Dorsolateral prefrontal cortex (tissue), 120 donors: ENCODE measurements at regions of chr11 and their contacts with region 1.

Region 1: GRCh38 chr11:72080256-72080974 is at the starts of genes LRRC51 and NUMA1:
- DNase-seq: peak; percentile 98 to 100 (median 100)
- H3K4me3 ChIP-seq: peak within 1 kb of the TSS; percentile 50 to 98 (median 85)
- H3K27ac ChIP-seq: peak within 1 kb of the TSS; percentile 27 to 96 (median 88)
- H3K27me3 ChIP-seq: no peaks in the 10 kb centered on the region
- CTCF ChIP-seq: peak in 14 of 56 donors; percentile 7 to 43 (median 12)
- total RNA-seq, gene LRRC51: 7.7 to 39.9 (median 17.7) TPM
- total RNA-seq, gene NUMA1: 140 to 428 (median 218) TPM

Region 2: DNA sequence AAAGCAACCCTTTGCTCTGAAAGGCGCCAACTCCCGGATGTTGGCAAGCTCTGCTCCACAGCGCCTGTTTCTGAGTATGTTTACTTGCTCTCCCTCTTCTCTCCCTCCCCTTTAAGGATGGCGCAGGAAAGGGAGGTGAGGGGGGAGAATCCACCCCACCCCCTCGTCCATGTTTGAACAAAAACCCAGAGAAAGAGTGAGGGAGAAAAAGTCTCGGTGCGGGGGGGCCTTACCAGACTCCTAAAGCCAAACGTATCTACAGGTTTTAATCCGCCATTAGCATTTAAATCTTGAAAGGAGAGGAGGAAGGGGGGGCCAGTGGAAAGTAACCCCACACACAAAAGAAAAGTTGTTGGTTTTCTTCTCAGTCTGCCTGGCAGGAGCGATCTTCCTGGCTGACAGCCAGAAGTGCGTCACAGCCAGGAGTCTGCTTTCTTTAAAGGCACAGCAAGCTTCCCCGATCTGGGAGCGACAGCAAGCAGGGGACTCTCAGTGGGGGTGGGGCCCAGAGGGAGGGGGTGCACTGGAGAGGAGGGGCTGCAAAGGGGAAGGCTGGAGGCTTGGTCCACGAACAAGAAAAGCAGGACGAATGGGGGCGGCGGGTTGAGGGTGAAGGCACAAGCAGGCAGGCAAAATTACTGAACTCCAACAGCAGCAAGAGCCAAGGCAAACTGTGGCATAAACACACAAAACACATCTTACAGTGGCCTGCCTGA is 39.5 kb before region 1 on chr11:
- intact Hi-C with region 1: loop called (anchors 1 kb)
- DNase-seq: peak; percentile 86 to 96 (median 92)
- H3K4me3 ChIP-seq: peak overlapping the region; percentile 45 to 84 (median 71)
- H3K27ac ChIP-seq: peak overlapping the region; percentile 92 to 100 (median 100)
- H3K27me3 ChIP-seq: no peaks in the 10 kb centered on the region
- CTCF ChIP-seq: peak in 6 of 56 donors; percentile 5 to 27 (median 16)

Region 3: GRCh38 chr11:72250661-72251465 is 170.4 kb after region 1 on chr11:
- intact Hi-C with region 1: no loop called
- DNase-seq: no peak
- H3K4me3 ChIP-seq: no peak overlapping the region
- H3K27ac ChIP-seq: no peak overlapping the region
- H3K27me3 ChIP-seq: peaks cover 0 to 64% (median 23%) of the 10 kb centered on the region in 45 donors
- CTCF ChIP-seq: no peak

Region 4: DNA sequence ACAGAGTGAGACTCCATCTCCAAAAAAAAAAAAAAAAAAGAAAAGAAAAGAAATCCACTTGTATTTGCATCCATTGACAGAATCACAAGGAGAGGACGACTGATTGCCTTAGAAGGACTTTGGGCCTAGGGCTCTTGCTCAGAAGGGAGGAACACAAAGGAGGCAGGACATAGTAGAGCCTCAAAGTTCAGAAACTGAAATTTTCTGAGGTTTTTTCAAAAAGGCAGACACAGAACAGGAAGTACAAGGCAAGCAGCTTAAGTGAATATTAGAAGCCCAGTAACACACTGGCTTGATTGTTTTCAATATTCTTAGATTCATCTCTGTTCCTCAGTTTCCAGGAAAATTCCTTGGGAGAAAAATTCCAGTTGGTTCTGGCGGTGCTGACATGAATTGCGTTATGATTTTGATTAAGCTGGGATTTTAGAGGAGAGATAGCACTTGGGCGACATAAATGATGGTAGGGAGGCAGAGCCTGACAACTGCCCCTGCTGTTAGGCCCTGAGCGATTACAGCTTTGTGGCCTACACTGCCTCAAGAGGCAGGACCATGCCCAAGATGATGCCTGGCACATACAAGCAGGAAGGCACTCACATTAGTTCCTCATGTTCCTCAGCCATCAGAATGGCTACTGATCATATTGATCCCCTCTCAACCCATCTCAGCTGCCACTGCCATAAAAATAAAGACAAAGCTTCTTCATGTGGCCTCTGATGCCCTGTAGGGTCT is 338.6 kb after region 1 on chr11:
- intact Hi-C with region 1: no loop called
- DNase-seq: no peak
- H3K4me3 ChIP-seq: no peak overlapping the region
- H3K27ac ChIP-seq: peak overlapping the region in 24 of 59 donors; percentile 9 to 90 (median 80)
- H3K27me3 ChIP-seq: no peaks in the 10 kb centered on the region
- CTCF ChIP-seq: peak in 1 of 56 donors; percentile 6